RWPE1 (cell line): ENCODE measurements at regions of chr1 and their contacts with region 1.

Region 1: GRCh38 chr1:9865724-9866123 is 42.0 kb upstream of the CLSTN1 start:
- DNase-seq: no peak
- H3K27ac ChIP-seq: peak overlapping the region; percentile 77
- CTCF ChIP-seq: no peak

Region 2: GRCh38 chr1:9340172-9340854 is 525.4 kb before region 1 on chr1:
- CTCF ChIA-PET with region 1: interaction called, 10 read pairs
- POLR2A ChIA-PET with region 1: no interaction called
- DNase-seq: peak; percentile 75
- H3K27ac ChIP-seq: peak overlapping the region; percentile 83
- CTCF ChIP-seq: no peak

Region 3: GRCh38 chr1:10128101-10128765 is 262.5 kb after region 1 on chr1:
- CTCF ChIA-PET with region 1: no interaction called
- POLR2A ChIA-PET with region 1: no interaction called
- DNase-seq: no peak
- H3K27ac ChIP-seq: no peak overlapping the region
- CTCF ChIP-seq: no peak